Activated B cell treated with CpG ODN at 0.5 μM for 24 hours (primary cell): ENCODE measurements at regions of chr21 and their contacts with region 1.

Region 1: GRCh38 chr21:31866077-31866511 is 6.7 kb upstream of the HUNK start:
- DNase-seq: peak; percentile 57
- ATAC-seq: peak; percentile 80
- H3K4me3 Mint-ChIP-seq: no peak overlapping the region
- H3K27ac Mint-ChIP-seq: no peak overlapping the region
- H3K4me1 Mint-ChIP-seq: peaks cover 2% of the 10 kb centered on the region
- H3K27me3 Mint-ChIP-seq: peaks cover 15% of the 10 kb centered on the region
- CTCF ChIP-seq: peak; percentile 76

Region 2: GRCh38 chr21:31781737-31782136 is 84.4 kb before region 1 on chr21:
- CTCF ChIA-PET with region 1: no interaction called
- POLR2A ChIA-PET with region 1: no interaction called
- intact Hi-C with region 1: loop called (anchors 2 kb)
- DNase-seq: no peak
- ATAC-seq: no peak
- H3K4me3 Mint-ChIP-seq: no peak overlapping the region
- H3K27ac Mint-ChIP-seq: no peak overlapping the region
- H3K4me1 Mint-ChIP-seq: peaks cover 29% of the 10 kb centered on the region
- H3K27me3 Mint-ChIP-seq: no peaks in the 10 kb centered on the region
- CTCF ChIP-seq: no peak

Region 3: DNA sequence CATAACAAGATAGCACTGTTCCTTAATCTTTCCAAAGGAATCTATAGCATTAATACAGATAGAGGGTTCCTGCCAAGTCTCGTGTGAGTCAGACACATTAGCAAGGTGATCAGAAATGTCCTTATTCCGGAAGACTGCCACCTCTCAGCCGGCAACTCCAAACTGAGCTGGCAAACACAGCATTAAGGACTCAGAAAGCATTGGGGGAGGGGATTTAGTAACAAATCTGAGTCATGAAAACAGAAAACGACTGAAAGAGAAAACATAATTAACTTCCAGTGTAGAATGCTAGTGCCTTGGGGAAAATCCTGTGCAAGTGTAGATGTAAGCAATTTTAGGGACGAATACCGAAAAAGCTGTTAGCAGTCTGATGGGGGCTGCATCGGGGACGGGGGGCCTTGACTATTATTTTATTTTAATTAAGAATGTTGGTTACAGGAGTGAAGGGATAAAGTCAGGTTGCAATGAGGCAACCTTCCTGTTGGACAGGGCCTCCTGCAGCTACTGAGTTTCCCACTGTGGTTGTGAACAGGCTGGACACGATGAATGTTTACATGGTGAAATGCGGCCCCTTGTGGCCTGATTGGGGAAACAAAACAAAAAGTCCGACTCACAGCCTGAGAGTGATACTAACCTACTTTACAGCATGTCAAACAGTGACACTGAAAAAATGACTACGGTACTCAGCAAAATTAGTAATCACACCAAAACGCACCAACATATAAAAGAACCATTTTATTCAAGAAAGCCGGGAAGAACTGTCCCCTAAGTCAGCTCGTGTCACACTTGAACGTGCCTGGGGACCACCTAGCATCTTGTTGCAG is 392.1 kb after region 1 on chr21:
- CTCF ChIA-PET with region 1: interaction called, 4 read pairs
- POLR2A ChIA-PET with region 1: no interaction called
- intact Hi-C with region 1: loop called (anchors 1 kb)
- DNase-seq: no peak
- ATAC-seq: no peak
- H3K4me3 Mint-ChIP-seq: no peak overlapping the region
- H3K27ac Mint-ChIP-seq: no peak overlapping the region
- H3K4me1 Mint-ChIP-seq: no peaks in the 10 kb centered on the region
- H3K27me3 Mint-ChIP-seq: peaks cover 12% of the 10 kb centered on the region
- CTCF ChIP-seq: no peak

Region 4: GRCh38 chr21:32569261-32570230 is 703.5 kb after region 1 on chr21:
- CTCF ChIA-PET with region 1: no interaction called
- POLR2A ChIA-PET with region 1: no interaction called
- intact Hi-C with region 1: loop called (anchors 10 kb)
- DNase-seq: peak; percentile 42
- ATAC-seq: peak; percentile 90
- H3K4me3 Mint-ChIP-seq: peak overlapping the region; percentile 87
- H3K27ac Mint-ChIP-seq: no peak overlapping the region
- H3K4me1 Mint-ChIP-seq: peaks cover 5% of the 10 kb centered on the region
- H3K27me3 Mint-ChIP-seq: peaks cover 26% of the 10 kb centered on the region
- CTCF ChIP-seq: no peak

Region 5: GRCh38 chr21:32597205-32597604 is 731.1 kb after region 1 on chr21:
- CTCF ChIA-PET with region 1: no interaction called
- POLR2A ChIA-PET with region 1: no interaction called
- intact Hi-C with region 1: loop called (anchors 1 kb)
- DNase-seq: no peak
- ATAC-seq: no peak
- H3K4me3 Mint-ChIP-seq: no peak overlapping the region
- H3K27ac Mint-ChIP-seq: no peak overlapping the region
- H3K4me1 Mint-ChIP-seq: peaks cover 7% of the 10 kb centered on the region
- H3K27me3 Mint-ChIP-seq: no peaks in the 10 kb centered on the region
- CTCF ChIP-seq: no peak